Calu3 (cell line): ENCODE measurements at regions of chr3 and their contacts with region 1.

Region 1: DNA sequence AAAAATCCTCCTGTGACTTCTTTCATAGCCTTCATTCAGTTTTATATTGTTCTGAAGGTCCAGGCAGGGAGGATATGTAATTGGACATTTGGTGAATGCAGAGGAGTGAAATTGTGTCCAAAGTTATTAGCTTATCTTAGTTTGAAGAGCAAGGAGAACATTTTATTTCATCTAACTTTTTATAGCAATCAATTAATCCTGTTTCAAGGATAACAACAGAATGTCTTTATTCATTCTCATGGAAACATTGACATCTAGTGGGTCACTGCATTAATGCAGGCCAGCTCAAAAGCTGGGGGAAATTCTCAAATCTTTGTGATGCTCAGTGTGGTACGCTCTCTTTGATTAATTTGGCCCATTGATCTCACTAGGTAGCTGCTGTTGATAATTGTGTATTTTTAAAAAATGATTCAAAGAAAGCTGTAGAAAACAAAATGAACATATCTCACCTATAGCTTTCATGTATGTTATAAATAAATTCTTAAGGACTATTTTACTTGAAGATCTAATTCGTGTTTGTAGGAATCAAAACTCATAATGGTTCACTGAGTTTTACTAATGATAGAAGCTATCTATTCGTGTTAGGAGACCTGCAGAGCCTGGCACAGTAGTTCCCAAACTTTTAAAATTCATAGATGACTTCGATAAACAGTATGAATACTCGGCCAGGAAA is 150.8 kb upstream of the KCNMB2 start:
- DNase-seq: peak; percentile 61
- H3K4me3 Mint-ChIP-seq: no peak overlapping the region
- H3K27ac Mint-ChIP-seq: no peak overlapping the region
- H3K4me1 Mint-ChIP-seq: no peaks in the 10 kb centered on the region
- H3K27me3 Mint-ChIP-seq: no peaks in the 10 kb centered on the region
- CTCF ChIP-seq: peak; percentile 78

Region 2: DNA sequence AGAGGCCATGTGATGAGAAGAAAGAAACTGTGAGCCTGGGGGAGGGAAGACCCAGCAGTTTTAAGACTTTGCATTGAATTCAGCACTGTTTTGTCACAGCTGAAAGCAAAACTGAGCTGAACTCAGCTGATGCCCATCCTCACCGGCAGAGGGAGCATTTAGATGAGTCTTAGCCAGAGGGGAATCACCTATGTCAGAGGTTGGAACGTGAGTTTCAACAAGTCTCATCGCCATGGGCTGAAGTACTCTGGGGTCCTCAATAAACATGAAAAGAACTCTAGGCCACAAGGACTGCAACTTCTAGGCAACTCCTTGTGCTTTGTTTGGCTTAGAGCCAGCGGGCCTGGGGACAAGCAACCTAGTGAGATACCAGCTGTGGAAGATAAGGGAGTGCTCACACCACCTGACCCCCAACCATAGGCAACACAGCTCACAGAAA is 1512.6 kb before region 1 on chr3:
- CTCF ChIA-PET with region 1: interaction called, 6 read pairs
- intact Hi-C with region 1: loop called (anchors 2 kb)
- DNase-seq: peak; percentile 73
- H3K4me3 Mint-ChIP-seq: no peak overlapping the region
- H3K27ac Mint-ChIP-seq: no peak overlapping the region
- H3K4me1 Mint-ChIP-seq: peaks cover 17% of the 10 kb centered on the region
- H3K27me3 Mint-ChIP-seq: no peaks in the 10 kb centered on the region
- CTCF ChIP-seq: peak; percentile 94

Region 3: GRCh38 chr3:178100862-178101261 is 284.6 kb before region 1 on chr3:
- CTCF ChIA-PET with region 1: no interaction called
- intact Hi-C with region 1: loop called (anchors 5 kb)
- DNase-seq: no peak
- H3K4me3 Mint-ChIP-seq: no peak overlapping the region
- H3K27ac Mint-ChIP-seq: no peak overlapping the region
- H3K4me1 Mint-ChIP-seq: no peaks in the 10 kb centered on the region
- H3K27me3 Mint-ChIP-seq: no peaks in the 10 kb centered on the region
- CTCF ChIP-seq: no peak